GM12878 (cell line): ENCODE measurements at regions of chr6 and their contacts with region 1.

Region 1: DNA sequence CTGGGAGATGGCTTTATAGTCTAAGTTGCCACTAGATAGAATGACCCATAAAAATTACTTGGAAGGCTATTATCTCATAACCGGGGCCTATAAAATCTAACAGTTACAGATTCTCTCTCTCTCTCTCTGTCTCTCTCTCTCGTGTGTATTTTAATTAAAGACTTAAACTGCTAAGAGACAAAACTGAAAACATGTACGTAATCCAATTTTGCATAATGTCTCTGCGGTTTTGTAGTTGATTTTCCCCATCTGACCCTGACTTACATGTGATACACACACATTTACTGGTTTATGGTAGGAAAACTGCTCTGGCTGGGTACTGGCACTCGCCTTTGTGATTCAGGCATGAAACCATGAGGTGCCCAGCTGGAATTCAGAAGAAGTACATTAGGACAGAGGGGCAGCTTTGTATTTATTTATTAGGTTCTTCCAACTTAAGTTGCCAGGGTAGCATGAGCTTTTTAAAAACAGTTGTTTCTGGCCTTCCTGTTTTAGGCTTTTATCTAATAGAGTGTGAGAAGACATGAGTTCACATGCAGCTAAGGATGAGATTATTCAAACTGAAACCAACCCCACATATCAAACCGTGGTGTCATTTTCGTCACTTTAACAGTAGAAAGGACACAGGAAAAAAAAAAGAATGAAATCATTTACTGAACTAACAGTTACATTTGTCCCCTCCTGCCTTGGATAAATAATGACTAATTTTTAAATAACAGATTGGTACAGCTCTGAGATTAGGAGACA is 182.5 kb downstream of the GMPR start:
- DNase-seq: peak; percentile 97
- ATAC-seq: peak; percentile 68
- H3K4me3 ChIP-seq: no peak overlapping the region
- H3K27ac ChIP-seq: peak overlapping the region; percentile 98
- H3K4me1 ChIP-seq: peaks cover 36% of the 10 kb centered on the region
- H3K27me3 ChIP-seq: no peaks in the 10 kb centered on the region
- CTCF ChIP-seq: no peak
- EP300 ChIP-seq: peak; percentile 91; a peak in 3 of 4 replicates
- POLR2A ChIP-seq: peak; percentile 48; the same call in 1 of the 2 replicates
- RAD21 ChIP-seq: 0 out of 2 replicates have a peak, but pooled peaks have one; percentile 18

Region 2: DNA sequence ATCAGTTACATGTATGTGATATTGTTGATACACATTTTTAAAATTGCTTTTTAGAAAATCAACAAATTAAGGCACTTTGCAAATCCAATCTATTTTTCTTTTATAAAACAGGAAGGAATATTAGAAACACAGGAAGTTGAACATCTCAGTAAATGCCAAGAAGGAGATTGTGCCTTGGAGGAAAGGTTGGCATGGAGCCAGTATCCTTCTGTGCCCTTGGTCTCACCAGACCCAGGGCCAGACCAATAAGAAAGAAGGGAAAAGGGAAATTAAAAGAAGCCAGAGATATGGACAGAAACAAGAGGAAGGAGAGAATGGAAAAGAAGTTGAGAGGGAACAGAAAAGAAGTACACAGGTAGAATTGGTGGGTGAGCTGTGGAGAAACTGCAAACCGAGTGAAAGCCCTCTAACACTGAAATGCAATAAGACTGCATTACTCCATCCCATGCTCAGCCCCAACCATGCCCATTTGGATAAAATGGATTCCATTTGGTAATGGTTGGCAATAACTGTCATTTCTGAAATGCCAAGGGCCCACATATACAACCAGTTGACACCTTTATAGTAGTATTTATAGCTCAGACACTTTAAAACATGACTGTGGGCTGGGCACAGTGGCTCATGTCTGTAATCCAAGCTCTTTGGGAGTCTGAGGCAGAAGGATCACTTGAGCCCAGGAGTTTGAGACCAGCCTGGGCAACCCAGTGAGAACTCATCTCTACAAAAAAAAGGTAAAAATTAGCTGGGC is 48.7 kb before region 1 on chr6:
- CTCF ChIA-PET with region 1: interaction called, 3 read pairs
- POLR2A ChIA-PET with region 1: interaction called, 6 read pairs
- RAD21 ChIA-PET with region 1: interaction called, 13 read pairs
- SMC1A ChIA-PET with region 1: interaction called, 7 read pairs
- in situ Hi-C with region 1: no loop called
- intact Hi-C with region 1: no loop called
- DNase-seq: no peak
- ATAC-seq: no peak
- H3K4me3 ChIP-seq: no peak overlapping the region
- H3K27ac ChIP-seq: no peak overlapping the region
- H3K4me1 ChIP-seq: peaks cover 23% of the 10 kb centered on the region
- H3K27me3 ChIP-seq: no peaks in the 10 kb centered on the region
- CTCF ChIP-seq: no peak
- EP300 ChIP-seq: no peak
- POLR2A ChIP-seq: no peak
- RAD21 ChIP-seq: no peak

Region 3: DNA sequence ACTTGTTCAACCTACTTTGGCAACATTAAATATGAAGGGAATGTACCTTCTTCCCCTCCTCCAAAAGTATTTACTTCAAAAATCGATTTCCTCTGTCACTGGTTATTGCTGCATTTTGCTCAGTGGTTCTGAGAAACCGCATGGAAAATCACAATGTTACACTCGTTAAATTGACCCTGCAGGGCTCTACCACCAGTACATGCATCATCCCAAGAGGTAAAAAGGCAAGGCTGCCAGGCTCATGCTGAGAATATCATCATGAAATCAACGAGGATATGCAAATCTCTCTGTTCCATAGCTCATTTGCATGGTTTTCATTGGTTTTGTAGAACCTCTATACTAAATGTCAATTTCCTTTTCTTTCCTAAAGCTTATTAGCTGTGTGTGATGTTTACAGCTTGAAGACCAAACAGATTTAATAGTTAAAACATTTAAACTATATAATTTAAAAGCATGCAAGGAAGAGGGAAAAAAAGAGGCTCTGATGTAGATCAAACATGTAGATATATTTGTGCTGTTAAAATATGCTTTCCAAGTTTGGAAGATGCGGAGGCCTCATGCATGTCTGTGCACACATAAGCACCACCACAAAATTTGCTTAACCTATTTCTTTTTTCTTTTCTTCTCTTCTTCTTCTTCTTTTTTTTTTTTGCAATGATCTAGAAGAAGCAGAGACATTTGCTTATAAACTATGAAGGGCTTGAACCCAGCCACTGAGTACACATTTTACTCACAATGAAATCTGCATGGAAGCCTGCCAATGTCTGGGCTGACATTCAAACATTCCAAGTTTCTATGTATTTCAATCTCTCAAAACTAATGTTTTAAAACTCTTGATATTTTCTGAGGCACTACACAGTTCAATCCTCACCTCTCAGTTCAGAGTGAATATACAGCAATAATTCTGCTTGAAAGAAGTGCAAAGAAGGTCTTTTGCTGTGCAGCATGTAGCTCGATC is 11.5 kb after region 1 on chr6:
- CTCF ChIA-PET with region 1: interaction called, 18 read pairs
- POLR2A ChIA-PET with region 1: interaction called, 10 read pairs
- RAD21 ChIA-PET with region 1: interaction called, 99 read pairs
- SMC1A ChIA-PET with region 1: interaction called, 43 read pairs
- in situ Hi-C with region 1: no loop called
- intact Hi-C with region 1: no loop called
- DNase-seq: peak; percentile 77
- ATAC-seq: peak; percentile 78
- H3K4me3 ChIP-seq: peak overlapping the region; percentile 14; the same call in 1 of the 2 replicates
- H3K27ac ChIP-seq: peak overlapping the region; percentile 39
- H3K4me1 ChIP-seq: peaks cover 45% of the 10 kb centered on the region
- H3K27me3 ChIP-seq: no peaks in the 10 kb centered on the region
- CTCF ChIP-seq: no peak
- EP300 ChIP-seq: 0 out of 4 replicates have a peak, but pooled peaks of 1 of the 2 experiments have one; percentile 7
- POLR2A ChIP-seq: no peak
- RAD21 ChIP-seq: 0 out of 2 replicates have a peak, but pooled peaks have one; percentile 1

Region 4: GRCh38 chr6:16471222-16471909 is 50.5 kb after region 1 on chr6:
- CTCF ChIA-PET with region 1: interaction called, 41 read pairs
- POLR2A ChIA-PET with region 1: interaction called, 134 read pairs
- RAD21 ChIA-PET with region 1: interaction called, 215 read pairs
- SMC1A ChIA-PET with region 1: interaction called, 338 read pairs
- in situ Hi-C with region 1: loop called (anchors 5 kb)
- intact Hi-C with region 1: loop called (anchors 1 kb)
- DNase-seq: peak; percentile 76
- ATAC-seq: peak; percentile 71
- H3K4me3 ChIP-seq: 0 out of 2 replicates have a peak overlapping the region, but pooled peaks have one; percentile 9
- H3K27ac ChIP-seq: peak overlapping the region; percentile 90
- H3K4me1 ChIP-seq: peaks cover 71% of the 10 kb centered on the region
- H3K27me3 ChIP-seq: no peaks in the 10 kb centered on the region
- CTCF ChIP-seq: no peak
- EP300 ChIP-seq: peak; percentile 74 to 81; a peak in 3 of 4 replicates
- POLR2A ChIP-seq: peak; percentile 47; the same call in 1 of the 2 replicates
- RAD21 ChIP-seq: no peak

Region 5: DNA sequence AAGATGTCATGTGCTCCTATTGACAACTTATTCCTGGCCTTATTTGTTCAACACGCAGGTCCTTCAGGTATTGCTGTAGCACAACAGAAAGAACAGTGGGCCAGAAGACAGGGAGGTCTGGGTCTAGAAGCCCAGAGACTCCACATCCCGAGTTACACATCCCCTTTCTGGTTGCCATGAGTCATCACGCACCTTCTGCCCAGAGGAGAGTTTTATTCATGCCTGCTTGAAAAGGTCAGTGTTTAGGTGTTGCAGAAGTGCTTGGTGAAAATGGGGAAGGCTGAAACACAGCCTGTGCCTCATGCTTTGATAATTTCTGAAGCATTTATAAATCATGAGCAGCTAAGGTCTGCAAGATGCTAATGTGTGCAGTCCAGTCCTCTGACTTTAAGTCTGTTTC is 73.9 kb after region 1 on chr6:
- CTCF ChIA-PET with region 1: interaction called, 8 read pairs
- POLR2A ChIA-PET with region 1: interaction called, 26 read pairs
- RAD21 ChIA-PET with region 1: interaction called, 85 read pairs
- SMC1A ChIA-PET with region 1: interaction called, 42 read pairs
- in situ Hi-C with region 1: no loop called
- intact Hi-C with region 1: no loop called
- DNase-seq: peak; percentile 90
- ATAC-seq: peak; percentile 75
- H3K4me3 ChIP-seq: peak overlapping the region; percentile 3; the same call in 1 of the 2 replicates
- H3K27ac ChIP-seq: peak overlapping the region; percentile 85
- H3K4me1 ChIP-seq: peaks cover 60% of the 10 kb centered on the region
- H3K27me3 ChIP-seq: no peaks in the 10 kb centered on the region
- CTCF ChIP-seq: no peak
- EP300 ChIP-seq: peak in 1 of 2 experiments; percentile 87; a peak in 3 of 4 replicates
- POLR2A ChIP-seq: no peak
- RAD21 ChIP-seq: no peak

Region 6: DNA sequence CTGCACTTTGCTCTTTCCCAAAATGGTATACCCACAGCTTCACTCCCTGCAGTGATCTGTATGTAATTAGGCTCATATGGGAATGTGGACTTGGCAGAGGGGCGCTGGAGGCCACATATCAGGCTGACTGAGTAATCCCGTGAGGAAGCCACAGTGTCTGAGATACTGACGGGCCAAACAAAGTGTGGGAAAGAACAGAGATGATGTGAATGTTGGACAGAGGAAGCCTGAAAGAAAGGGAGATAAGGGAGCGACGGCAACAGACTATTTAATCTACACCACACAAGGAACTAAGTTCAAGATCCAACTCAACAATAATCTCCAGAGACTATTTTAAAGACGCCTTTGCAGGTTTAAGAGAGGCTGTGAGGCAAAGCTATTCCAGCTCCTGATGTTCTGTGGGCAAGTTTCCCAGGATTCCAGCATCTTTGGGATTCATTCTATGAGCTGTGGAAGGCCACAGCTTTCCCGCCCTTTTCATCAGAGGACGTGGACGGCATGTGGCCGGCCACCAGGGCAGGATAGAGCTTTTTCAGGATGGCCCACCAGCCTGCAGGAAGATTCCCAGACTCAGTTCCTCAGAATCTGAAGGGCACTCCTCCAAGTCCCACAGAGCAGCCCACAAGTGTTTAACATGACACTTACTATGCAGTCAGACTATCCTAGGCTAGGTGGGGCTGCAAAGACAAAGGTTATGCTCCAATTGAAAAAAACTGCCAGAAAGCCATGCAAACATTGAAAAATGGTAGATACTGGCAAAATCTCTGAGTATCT is 102.9 kb after region 1 on chr6:
- CTCF ChIA-PET with region 1: no interaction called
- POLR2A ChIA-PET with region 1: no interaction called
- RAD21 ChIA-PET with region 1: no interaction called
- SMC1A ChIA-PET with region 1: no interaction called
- in situ Hi-C with region 1: no loop called
- intact Hi-C with region 1: no loop called
- DNase-seq: no peak
- ATAC-seq: no peak
- H3K4me3 ChIP-seq: no peak overlapping the region
- H3K27ac ChIP-seq: no peak overlapping the region
- H3K4me1 ChIP-seq: peaks cover 9% of the 10 kb centered on the region
- H3K27me3 ChIP-seq: no peaks in the 10 kb centered on the region
- CTCF ChIP-seq: no peak
- EP300 ChIP-seq: no peak
- POLR2A ChIP-seq: no peak
- RAD21 ChIP-seq: no peak

Region 7: DNA sequence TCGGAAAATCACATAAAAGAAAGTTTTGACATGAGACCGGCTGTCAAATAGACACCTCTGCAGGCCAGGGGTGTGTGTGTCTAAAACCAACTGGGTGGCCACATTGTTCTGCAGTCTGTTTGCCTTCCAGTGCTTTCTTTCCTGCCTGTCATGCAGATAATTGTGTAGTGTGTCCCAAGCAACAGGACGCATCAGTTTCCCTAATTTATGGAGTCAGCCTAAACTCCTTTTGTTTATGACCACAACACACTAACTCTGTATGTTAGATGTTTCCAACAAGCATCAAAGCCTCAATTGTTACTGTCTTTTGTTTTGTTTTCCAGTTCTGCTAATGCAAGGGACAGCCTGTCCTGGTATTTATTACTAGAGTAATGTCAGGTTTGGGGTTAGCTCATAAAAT is 134.7 kb after region 1 on chr6:
- CTCF ChIA-PET with region 1: no interaction called
- POLR2A ChIA-PET with region 1: no interaction called
- RAD21 ChIA-PET with region 1: no interaction called
- SMC1A ChIA-PET with region 1: no interaction called
- in situ Hi-C with region 1: no loop called
- intact Hi-C with region 1: no loop called
- DNase-seq: no peak
- ATAC-seq: no peak
- H3K4me3 ChIP-seq: no peak overlapping the region
- H3K27ac ChIP-seq: no peak overlapping the region
- H3K4me1 ChIP-seq: no peaks in the 10 kb centered on the region
- H3K27me3 ChIP-seq: no peaks in the 10 kb centered on the region
- CTCF ChIP-seq: no peak
- EP300 ChIP-seq: no peak
- POLR2A ChIP-seq: no peak
- RAD21 ChIP-seq: no peak

Region 8: DNA sequence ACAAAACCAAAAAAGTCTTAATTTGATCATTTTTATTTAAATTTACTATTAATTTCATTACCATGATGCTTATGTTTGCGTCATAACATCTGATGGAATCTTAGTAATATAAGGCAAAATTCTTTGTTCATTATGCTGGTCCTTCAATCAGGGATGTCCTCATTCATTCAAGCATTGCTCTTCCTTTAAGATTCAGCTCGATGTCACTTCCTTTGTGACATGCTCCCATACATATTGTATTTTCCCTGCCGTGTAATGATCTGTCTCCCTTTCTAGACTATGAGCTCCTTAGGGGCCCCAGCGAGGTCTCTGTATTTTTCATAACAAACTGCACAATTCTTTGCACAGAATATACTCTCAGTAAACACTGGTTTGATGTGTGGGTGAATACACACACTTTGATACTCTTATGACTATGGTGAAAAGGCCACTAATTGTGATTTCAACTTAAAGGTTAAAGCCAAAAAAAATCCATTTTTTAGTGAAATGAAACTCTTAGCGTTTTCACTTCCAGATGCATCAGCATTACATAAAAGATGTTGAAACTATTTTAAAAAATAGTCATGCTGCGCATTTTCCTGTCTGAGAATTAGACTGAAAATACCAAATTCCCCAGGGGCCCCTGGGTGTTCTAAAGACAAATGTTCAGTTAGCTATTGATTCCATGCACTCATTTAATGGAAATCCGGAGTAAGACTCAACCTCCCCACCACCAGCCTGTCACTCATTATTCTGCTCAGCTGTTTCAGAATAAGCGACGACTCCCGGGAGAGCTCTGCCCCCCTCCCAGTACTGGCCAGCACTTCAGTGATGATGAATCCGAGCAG is 170.7 kb after region 1 on chr6:
- CTCF ChIA-PET with region 1: interaction called, 5 read pairs
- POLR2A ChIA-PET with region 1: interaction called, 5 read pairs
- RAD21 ChIA-PET with region 1: interaction called, 9 read pairs
- SMC1A ChIA-PET with region 1: interaction called, 13 read pairs
- in situ Hi-C with region 1: loop called (anchors 5 kb)
- intact Hi-C with region 1: loop called (anchors 1 kb)
- DNase-seq: peak; percentile 85
- ATAC-seq: peak; percentile 90
- H3K4me3 ChIP-seq: peak overlapping the region; percentile 43; the same call in 1 of the 2 replicates
- H3K27ac ChIP-seq: peak overlapping the region; percentile 89
- H3K4me1 ChIP-seq: peaks cover 31% of the 10 kb centered on the region
- H3K27me3 ChIP-seq: no peaks in the 10 kb centered on the region
- CTCF ChIP-seq: no peak
- EP300 ChIP-seq: peak; percentile 90 to 96; a peak in 3 of 4 replicates
- POLR2A ChIP-seq: no peak
- RAD21 ChIP-seq: no peak; the same call in 1 of the 2 replicates

Region 9: DNA sequence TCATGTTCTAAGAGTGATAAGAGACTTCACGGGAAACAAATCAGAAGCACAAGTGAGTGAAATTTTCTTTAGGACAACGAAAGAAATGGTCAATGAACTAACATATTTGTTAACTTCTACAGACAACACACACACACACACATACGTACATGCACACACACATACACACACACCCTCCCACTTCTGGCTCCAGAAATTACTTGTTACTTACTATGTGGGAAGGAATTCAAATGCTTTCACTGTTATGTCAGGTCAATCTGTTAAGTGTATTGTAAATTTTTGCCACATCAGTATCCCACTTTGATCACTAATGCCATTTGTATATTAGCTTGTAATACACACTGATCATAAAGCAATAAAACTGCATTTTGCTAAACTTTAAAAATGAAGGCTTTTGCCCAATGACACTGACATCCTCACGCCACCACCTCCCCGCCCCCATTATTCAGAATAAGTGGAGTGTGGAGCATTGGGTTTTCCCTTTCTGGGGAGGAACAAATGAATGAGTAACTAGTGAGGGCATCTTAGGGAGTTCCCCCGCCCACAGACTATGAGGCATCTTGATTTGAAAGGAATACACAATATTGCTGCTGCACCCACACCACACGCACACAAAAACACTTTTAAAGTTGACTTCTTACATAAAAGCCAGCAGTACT is 264.1 kb after region 1 on chr6:
- CTCF ChIA-PET with region 1: no interaction called
- POLR2A ChIA-PET with region 1: no interaction called
- RAD21 ChIA-PET with region 1: interaction called, 4 read pairs
- SMC1A ChIA-PET with region 1: interaction called, 3 read pairs
- in situ Hi-C with region 1: no loop called
- intact Hi-C with region 1: loop called (anchors 5 kb)
- DNase-seq: peak; percentile 56
- ATAC-seq: peak; percentile 80
- H3K4me3 ChIP-seq: peak overlapping the region; percentile 43; the same call in 1 of the 2 replicates
- H3K27ac ChIP-seq: no peak overlapping the region
- H3K4me1 ChIP-seq: peaks cover 31% of the 10 kb centered on the region
- H3K27me3 ChIP-seq: no peaks in the 10 kb centered on the region
- CTCF ChIP-seq: no peak
- EP300 ChIP-seq: peak; percentile 61 to 80; a peak in 3 of 4 replicates
- POLR2A ChIP-seq: no peak
- RAD21 ChIP-seq: no peak